ENCODE measurements at regions of chr2 and their contacts with region 1.

Region 1: DNA sequence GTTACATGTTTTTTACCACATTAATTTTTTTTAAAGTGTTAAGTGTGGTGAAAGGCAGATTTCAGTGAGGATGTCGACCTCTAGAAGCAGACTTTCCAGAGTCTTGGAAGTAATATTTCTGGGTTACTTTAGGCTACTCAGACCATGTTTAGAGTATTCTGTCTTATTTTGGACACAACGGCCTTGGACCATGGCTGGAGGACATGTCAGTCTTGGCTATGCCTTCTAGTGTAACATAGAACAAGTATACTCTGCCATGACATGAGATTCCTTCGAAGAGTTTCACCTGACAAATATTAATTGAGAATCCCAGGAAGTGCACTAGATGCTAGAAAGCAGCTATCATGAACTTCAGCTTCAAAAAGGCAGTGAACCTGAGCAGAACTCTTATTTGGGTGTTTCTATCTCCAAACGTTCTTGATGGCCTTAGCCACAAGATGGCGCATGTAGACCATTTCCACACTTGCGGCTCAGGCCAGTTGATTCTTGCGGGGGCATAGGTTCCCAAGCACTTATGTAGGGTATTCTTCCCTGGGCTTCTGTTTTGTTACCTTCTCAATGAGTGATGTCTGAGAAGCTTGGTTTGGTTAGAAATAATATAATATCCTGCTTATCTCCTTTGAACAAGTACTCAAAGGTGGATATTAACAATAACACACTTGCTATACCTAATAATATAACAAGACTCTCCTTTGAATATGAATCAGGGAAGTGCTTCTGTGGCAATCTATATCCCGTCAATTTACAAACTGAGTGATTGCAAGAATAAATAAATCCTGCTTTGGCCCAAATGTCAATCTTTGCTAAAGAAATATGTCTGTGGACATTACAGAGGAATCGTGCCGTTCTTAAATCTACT is 62.0 kb downstream of the CACNB4 start:
- DNase-seq: peak; percentile 77
- ATAC-seq: peak; percentile 72
- H3K4me3 Mint-ChIP-seq: no peak overlapping the region
- H3K27ac Mint-ChIP-seq: no peak overlapping the region
- H3K4me1 Mint-ChIP-seq: no peaks in the 10 kb centered on the region
- H3K27me3 Mint-ChIP-seq: peaks cover 2% of the 10 kb centered on the region
- CTCF ChIP-seq: peak; percentile 68

Region 2: GRCh38 chr2:151922845-151923666 is 113.8 kb before region 1 on chr2:
- CTCF ChIA-PET with region 1: no interaction called
- POLR2A ChIA-PET with region 1: no interaction called
- intact Hi-C with region 1: no loop called
- DNase-seq: no peak
- ATAC-seq: no peak
- H3K4me3 Mint-ChIP-seq: no peak overlapping the region
- H3K27ac Mint-ChIP-seq: no peak overlapping the region
- H3K4me1 Mint-ChIP-seq: no peaks in the 10 kb centered on the region
- H3K27me3 Mint-ChIP-seq: peaks cover 17% of the 10 kb centered on the region
- CTCF ChIP-seq: no peak

Region 3: DNA sequence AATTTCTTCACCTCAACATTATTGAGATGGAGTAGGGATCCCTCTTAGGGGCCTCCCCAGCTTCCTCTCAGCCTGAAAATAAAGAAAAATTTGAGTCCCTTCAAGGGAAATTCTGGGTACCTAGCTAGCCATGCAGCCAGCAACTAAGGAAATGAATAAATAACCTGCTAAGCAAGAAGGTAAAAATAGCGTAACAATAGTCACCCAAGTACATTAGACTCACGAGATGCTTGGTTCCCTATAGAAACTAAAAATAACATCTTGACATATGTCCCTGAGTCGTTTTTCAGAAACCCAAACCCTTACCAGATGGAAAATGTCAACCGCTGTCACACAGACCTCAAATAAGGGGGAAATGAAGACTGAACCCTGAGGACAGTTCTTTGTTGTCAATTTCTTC is 10.1 kb after region 1 on chr2:
- CTCF ChIA-PET with region 1: interaction called, 15 read pairs
- POLR2A ChIA-PET with region 1: interaction called, 3 read pairs
- intact Hi-C with region 1: no loop called
- DNase-seq: no peak
- ATAC-seq: no peak
- H3K4me3 Mint-ChIP-seq: no peak overlapping the region
- H3K27ac Mint-ChIP-seq: no peak overlapping the region
- H3K4me1 Mint-ChIP-seq: no peaks in the 10 kb centered on the region
- H3K27me3 Mint-ChIP-seq: peaks cover 4% of the 10 kb centered on the region
- CTCF ChIP-seq: no peak

Region 4: DNA sequence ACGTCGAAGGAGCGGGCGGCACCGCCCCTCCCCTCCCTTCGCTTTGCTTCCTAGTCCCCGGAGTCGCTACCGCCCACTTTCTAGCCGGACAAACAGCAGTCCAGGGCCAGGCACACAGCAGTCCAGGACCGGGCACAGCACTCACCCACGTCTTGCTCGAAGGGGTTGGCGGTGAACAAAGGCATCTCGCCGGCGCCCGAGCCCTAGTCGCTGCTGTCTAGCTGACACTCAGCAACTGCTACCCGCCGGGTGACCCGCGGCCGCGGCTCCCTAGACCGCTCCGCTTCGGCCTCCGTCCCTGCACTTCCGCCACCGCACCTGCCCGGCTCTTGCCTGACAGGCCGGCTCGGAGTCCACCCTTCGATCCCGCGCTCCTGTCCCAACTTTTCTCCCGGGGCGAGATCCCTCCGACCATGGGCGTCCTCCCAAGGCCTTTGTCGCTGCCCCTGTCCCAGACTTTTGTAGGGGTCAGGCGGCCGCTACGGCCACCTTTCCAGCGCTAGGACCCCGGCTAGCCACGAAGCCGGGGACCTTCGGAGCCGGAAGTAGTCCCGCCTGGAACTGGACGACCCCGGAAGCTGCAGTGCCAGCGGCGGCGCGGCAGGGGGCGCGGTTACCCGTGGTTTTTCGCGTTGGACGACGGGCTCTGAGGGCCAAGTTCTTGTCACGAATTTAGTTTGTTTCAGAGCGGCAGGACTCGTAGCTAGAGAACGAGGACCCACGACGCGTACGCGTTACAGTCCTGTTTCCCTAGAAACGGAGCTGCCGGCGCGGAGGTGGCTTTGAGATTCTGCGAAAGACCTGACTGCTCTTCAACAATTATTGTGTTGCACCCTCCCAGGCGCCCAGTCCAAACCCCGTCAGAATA is 138.9 kb after region 1 on chr2 and contains the start of gene STAM2:
- CTCF ChIA-PET with region 1: interaction called, 5 read pairs
- POLR2A ChIA-PET with region 1: no interaction called
- intact Hi-C with region 1: loop called (anchors 10 kb)
- DNase-seq: peak; percentile 92
- ATAC-seq: peak; percentile 92
- H3K4me3 Mint-ChIP-seq: peak within 1 kb of the TSS; percentile 96
- H3K27ac Mint-ChIP-seq: peak within 1 kb of the TSS; percentile 100
- H3K4me1 Mint-ChIP-seq: peaks cover 33% of the 10 kb centered on the region
- H3K27me3 Mint-ChIP-seq: no peaks in the 10 kb centered on the region
- CTCF ChIP-seq: peak; percentile 75
- total RNA-seq, gene STAM2: 13.0 to 13.3 TPM

Region 5: DNA sequence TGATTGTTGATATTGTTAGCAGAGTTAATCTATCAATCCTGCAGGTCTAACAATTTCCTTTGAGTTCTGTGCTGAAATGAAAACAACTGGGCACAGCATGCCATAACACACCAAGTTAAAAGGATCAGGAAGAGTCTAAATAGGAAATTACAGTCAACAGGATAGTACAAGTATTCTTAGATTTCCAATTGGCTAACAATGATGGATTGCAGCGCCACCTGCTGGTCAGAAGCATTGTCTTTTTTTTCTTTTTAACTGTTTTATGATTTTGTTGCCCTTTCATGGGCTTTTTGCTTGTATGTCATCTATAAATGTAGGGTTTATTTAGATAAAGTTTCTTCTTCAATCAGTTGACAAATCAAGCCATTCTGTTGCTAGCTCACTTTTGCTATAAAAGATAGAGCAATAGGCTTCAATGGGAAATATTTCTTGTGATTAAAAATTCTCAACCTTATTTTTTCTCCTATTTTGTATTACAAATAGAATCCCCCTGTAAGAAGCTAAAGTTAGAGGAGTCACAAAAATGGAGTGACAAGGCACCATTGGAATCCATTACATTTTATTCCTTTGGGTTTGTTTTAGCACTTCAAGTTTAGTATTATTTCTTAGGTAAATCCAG is 1482.5 kb after region 1 on chr2:
- CTCF ChIA-PET with region 1: no interaction called
- POLR2A ChIA-PET with region 1: no interaction called
- intact Hi-C with region 1: loop called (anchors 10 kb)
- DNase-seq: peak; percentile 75
- ATAC-seq: no peak
- H3K4me3 Mint-ChIP-seq: no peak overlapping the region
- H3K27ac Mint-ChIP-seq: no peak overlapping the region
- H3K4me1 Mint-ChIP-seq: no peaks in the 10 kb centered on the region
- H3K27me3 Mint-ChIP-seq: peaks cover 11% of the 10 kb centered on the region
- CTCF ChIP-seq: peak; percentile 76